Naive thymus-derived CD8-positive, alpha-beta T cell (primary cell): ENCODE measurements at regions of chr15 and their contacts with region 1.

Region 1: GRCh38 chr15:31326156-31326732 is 391 bp upstream of the KLF13 start:
- DNase-seq: peak; percentile 98 to 100 (median 100)
- ATAC-seq: peak; percentile 65 to 73
- H3K4me3 Mint-ChIP-seq: peak overlapping the region; percentile 50 to 91 (median 73)
- H3K27ac Mint-ChIP-seq: peak overlapping the region in 9 of 10 donors; percentile 35 to 97 (median 86)
- H3K4me1 Mint-ChIP-seq: peaks cover 33 to 73% (median 65%) of the 10 kb centered on the region in 4 donors
- H3K27me3 Mint-ChIP-seq: no peaks in the 10 kb centered on the region

Region 2: GRCh38 chr15:31206386-31206785 is 119.9 kb before region 1 on chr15:
- POLR2A ChIA-PET with region 1: interaction called, 23 read pairs
- DNase-seq: no peak
- ATAC-seq: no peak
- H3K4me3 Mint-ChIP-seq: no peak overlapping the region
- H3K27ac Mint-ChIP-seq: peak overlapping the region in 1 of 10 donors; percentile 20
- H3K4me1 Mint-ChIP-seq: peaks cover 6 to 48% (median 35%) of the 10 kb centered on the region in 4 donors
- H3K27me3 Mint-ChIP-seq: no peaks in the 10 kb centered on the region

Region 3: GRCh38 chr15:31265871-31266711 is 60.2 kb before region 1 on chr15:
- POLR2A ChIA-PET with region 1: interaction called, 208 read pairs
- DNase-seq: peak; percentile 22 to 89 (median 74)
- ATAC-seq: peak; percentile 80 to 89
- H3K4me3 Mint-ChIP-seq: peak overlapping the region; percentile 62 to 85 (median 80)
- H3K27ac Mint-ChIP-seq: peak overlapping the region; percentile 93 to 100 (median 97)
- H3K4me1 Mint-ChIP-seq: peaks cover 56 to 98% (median 95%) of the 10 kb centered on the region in 4 donors
- H3K27me3 Mint-ChIP-seq: no peaks in the 10 kb centered on the region

Region 4: GRCh38 chr15:31308185-31308639 is 18.0 kb before region 1 on chr15:
- POLR2A ChIA-PET with region 1: interaction called, 48 read pairs
- DNase-seq: peak in 3 of 10 donors; percentile 32 to 40 (median 37)
- ATAC-seq: peak; percentile 79 to 81
- H3K4me3 Mint-ChIP-seq: peak overlapping the region in 6 of 10 donors; percentile 23 to 73 (median 46)
- H3K27ac Mint-ChIP-seq: peak overlapping the region in 9 of 10 donors; percentile 19 to 86 (median 60)
- H3K4me1 Mint-ChIP-seq: peaks cover 20 to 55% (median 50%) of the 10 kb centered on the region in 4 donors
- H3K27me3 Mint-ChIP-seq: peaks cover 0 to 2% (median 0%) of the 10 kb centered on the region in 5 donors

Region 5: DNA sequence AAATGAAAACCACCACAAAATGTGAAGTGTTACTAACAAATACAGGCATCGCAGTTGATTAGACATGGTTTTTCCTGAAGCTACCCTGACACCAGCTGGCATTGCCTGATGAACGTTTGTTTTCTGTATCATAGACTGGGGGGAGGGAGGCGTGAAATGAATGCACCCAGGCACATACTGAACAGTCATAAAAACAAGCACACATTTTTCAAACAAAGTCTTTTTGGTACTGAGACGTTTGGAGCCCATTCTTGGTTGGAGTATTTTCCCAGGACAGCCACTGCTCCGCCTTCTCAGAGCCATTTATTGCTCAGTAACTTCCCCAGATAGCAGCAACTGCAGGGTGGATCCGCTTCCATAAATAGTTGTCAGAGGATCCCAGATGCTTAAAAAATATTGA is 52.8 kb after region 1 on chr15:
- POLR2A ChIA-PET with region 1: interaction called, 12 read pairs
- DNase-seq: peak in 2 of 10 donors; percentile 33 to 36
- ATAC-seq: peak; percentile 30 to 41
- H3K4me3 Mint-ChIP-seq: peak overlapping the region in 8 of 10 donors; percentile 15 to 79 (median 74)
- H3K27ac Mint-ChIP-seq: peak overlapping the region; percentile 84 to 97 (median 94)
- H3K4me1 Mint-ChIP-seq: peaks cover 32 to 73% (median 70%) of the 10 kb centered on the region in 4 donors
- H3K27me3 Mint-ChIP-seq: no peaks in the 10 kb centered on the region

Region 6: GRCh38 chr15:31472636-31473384 is 146.6 kb after region 1 on chr15:
- POLR2A ChIA-PET with region 1: interaction called, 15 read pairs
- DNase-seq: peak in 9 of 10 donors; percentile 27 to 75 (median 57)
- ATAC-seq: peak; percentile 84 to 87
- H3K4me3 Mint-ChIP-seq: peak overlapping the region; percentile 66 to 88 (median 81)
- H3K27ac Mint-ChIP-seq: peak overlapping the region; percentile 84 to 97 (median 95)
- H3K4me1 Mint-ChIP-seq: peaks cover 30 to 79% (median 63%) of the 10 kb centered on the region in 4 donors
- H3K27me3 Mint-ChIP-seq: no peaks in the 10 kb centered on the region

Region 7: DNA sequence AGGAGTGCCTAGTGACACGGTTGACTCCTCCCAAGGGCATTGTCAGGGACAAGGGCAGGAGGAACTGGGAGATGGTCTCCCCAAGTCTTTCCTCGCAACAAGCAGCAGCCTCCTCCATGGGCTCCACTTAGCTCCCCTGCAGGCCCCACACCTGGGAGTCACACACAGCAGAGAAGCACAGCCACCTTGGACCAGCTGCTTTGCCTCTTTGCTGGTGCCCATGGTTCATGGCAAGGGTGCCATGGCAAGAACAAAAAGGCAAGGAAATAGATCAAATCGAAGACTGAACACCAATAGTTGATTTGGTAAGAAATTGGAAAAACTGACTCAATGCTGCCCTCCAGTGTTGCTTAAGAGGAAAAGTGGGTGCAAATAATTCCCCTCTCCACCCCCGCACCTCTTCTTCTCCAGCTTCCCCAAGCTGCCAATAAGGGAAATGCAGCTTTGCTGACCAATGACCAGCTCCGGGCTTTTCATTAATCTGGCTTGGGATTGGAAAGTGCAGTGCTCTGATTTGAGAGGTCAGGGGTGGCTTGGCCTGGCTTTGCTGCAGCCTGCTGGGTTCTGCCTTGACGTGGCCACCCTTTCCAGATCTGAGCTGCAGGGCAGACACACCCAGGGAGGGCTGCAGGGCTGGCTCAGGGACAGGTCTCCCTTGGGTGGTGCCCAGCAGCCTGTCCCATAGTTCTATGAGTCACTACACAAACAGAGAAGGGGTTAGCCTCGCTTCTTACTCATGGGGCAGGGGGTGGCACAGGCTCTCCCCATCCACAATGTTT is 162.4 kb after region 1 on chr15:
- POLR2A ChIA-PET with region 1: interaction called, 56 read pairs
- DNase-seq: peak in 8 of 10 donors; percentile 17 to 71 (median 44)
- ATAC-seq: peak; percentile 28 to 43
- H3K4me3 Mint-ChIP-seq: peak overlapping the region in 1 of 10 donors; percentile 35
- H3K27ac Mint-ChIP-seq: peak overlapping the region; percentile 32 to 82 (median 66)
- H3K4me1 Mint-ChIP-seq: peaks cover 16 to 48% (median 35%) of the 10 kb centered on the region in 4 donors
- H3K27me3 Mint-ChIP-seq: peaks cover 0 to 5% (median 0%) of the 10 kb centered on the region in 5 donors